ENCODE measurements at regions of chr14 and their contacts with region 1.

Region 1: GRCh38 chr14:55433880-55434804 is 6.3 kb downstream of the TBPL2 start:
- DNase-seq: no peak
- ATAC-seq: peak; percentile 28
- H3K4me3 Mint-ChIP-seq: no peak overlapping the region
- H3K27ac Mint-ChIP-seq: no peak overlapping the region
- H3K4me1 Mint-ChIP-seq: peaks cover 20% of the 10 kb centered on the region
- H3K27me3 Mint-ChIP-seq: peaks cover 2% of the 10 kb centered on the region

Region 2: DNA sequence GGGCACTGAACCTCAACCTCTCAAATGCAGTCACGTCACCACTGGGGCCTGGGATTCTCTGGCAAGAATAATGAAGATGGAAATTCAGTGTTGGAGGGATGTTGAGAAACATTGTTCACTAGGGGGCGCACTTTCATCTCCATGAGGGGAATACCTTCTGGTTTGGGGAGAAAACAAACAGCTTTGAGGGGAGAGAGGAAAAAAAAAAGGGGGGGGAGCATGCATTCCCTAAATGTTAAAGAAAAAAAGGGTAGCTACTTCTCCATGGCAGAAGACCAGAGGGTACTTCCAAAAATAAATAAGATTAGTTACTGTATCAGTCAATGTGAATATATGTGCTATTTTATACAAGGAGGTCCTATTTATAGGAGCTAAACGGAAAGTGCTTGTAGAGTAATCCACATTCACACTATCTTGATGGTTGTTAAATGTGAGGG is 12.1 kb after region 1 on chr14:
- CTCF ChIA-PET with region 1: interaction called, 15 read pairs
- DNase-seq: peak; percentile 61
- ATAC-seq: peak; percentile 55
- H3K4me3 Mint-ChIP-seq: no peak overlapping the region
- H3K27ac Mint-ChIP-seq: no peak overlapping the region
- H3K4me1 Mint-ChIP-seq: peaks cover 3% of the 10 kb centered on the region
- H3K27me3 Mint-ChIP-seq: no peaks in the 10 kb centered on the region